PC-3 (cell line): ENCODE measurements at regions of chr7 and their contacts with region 1.

Region 1: DNA sequence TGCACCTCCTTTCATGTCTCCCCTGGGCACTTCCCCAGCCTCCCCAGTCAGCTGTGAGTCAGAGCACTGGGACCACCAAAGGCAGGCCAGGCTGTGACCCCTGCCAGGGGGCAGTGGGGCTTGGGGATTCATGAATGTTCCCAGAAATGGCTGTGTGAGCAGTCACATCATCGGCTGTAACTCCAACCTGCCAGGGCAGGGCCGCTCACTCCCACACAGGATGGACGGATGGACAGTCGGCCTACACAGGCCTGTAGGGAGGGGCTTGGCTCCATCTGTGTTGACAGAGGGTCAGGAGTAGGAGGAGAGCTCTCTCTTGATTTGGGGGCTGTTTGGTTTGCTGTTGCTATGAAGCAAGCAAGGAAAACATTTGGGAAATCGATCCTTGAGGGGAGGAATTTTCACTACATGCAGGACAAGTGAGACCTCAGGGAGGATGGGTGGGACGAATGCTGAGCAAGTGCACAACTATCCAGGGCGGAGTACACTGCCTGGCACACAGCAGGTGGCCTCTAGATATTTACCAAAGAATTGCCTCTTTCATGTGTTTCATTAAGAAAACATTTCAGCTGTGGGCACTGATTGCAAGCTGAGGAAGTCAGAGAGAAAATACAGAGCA is 2.9 kb upstream of the IGFBP1 start:
- DNase-seq: peak; percentile 84
- ATAC-seq: peak; percentile 82
- H3K4me3 ChIP-seq: no peak overlapping the region
- H3K27ac ChIP-seq: peak overlapping the region; percentile 37
- H3K4me1 ChIP-seq: peaks cover 41% of the 10 kb centered on the region
- H3K27me3 ChIP-seq: no peaks in the 10 kb centered on the region
- CTCF ChIP-seq: no peak

Region 2: DNA sequence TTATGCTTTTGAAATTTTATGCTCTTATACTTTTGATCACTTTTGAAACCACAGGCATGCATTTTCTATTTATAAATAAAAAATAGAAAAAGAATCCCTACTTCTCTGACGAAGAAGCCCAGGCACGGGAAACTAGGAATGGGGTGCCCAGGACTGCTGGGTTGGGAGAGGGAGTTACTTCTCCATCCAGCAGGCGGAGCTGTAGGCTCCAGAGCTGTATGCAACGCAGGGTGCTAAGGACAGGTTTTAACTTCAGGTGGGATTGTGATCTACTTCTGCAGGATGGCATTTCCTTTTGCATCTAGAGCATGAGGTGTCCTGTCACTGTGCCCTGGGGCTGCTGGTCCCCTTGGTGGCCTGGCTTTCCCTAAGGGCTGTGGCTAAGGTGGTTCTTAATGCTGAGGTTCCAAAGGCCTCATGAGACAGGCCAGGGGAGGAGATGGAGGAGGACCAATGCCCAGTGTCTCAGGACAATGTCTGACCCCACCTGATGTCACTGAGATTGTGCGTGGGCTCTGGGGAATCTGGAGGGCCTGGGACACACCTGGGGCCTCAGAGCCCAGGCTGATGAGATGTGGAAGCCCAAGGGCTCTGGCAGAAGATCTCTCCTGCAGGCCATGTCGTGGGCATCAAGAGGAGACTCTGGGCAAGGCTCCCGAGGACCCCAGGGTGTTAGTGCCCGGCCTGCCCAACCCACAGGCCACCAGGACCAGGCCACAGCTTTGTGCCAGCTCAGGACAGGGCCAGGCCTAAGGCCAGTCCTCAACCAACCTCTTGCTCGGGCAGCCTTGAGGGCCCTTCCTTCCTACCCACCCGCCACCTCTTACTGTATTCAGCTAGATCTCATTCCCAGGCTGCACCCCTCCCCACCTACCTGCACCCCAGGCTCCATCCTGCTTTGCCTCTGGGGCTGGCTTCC is 13.0 kb before region 1 on chr7:
- CTCF ChIA-PET with region 1: interaction called, 3 read pairs
- POLR2A ChIA-PET with region 1: interaction called, 6 read pairs
- intact Hi-C with region 1: loop called (anchors 1 kb)
- DNase-seq: peak; percentile 45
- ATAC-seq: no peak
- H3K4me3 ChIP-seq: no peak overlapping the region
- H3K27ac ChIP-seq: no peak overlapping the region
- H3K4me1 ChIP-seq: peaks cover 41% of the 10 kb centered on the region
- H3K27me3 ChIP-seq: no peaks in the 10 kb centered on the region
- CTCF ChIP-seq: peak; percentile 65